Mucosa of descending colon (tissue), 3 donors: ENCODE measurements at regions of chr22 and their contacts with region 1.

Region 1: DNA sequence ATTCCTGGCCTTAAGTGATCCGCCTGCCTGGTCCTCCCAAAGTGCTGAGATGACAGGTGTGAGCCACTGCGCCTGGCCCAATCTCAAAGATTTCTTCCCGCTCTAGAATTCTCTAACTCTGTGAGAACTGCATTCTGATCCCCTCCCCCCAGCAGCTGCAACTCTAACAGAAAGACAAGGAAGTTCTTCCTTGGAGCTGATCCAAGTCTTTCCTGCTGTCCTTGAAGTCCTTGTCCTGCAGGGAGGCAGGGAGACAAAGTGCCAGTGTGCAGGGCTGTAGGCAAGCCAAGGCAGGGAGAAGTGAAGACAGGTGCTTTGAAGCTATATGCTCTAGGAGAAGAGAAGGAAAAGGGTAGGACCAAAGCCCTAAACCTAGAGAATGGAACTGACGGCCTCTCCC is 9.5 kb upstream of the GGA1 start:
- DNase-seq: peak in 2 of 3 donors; percentile 70 to 94
- ATAC-seq: peak; percentile 76
- H3K4me3 ChIP-seq: no peak overlapping the region
- H3K4me1 ChIP-seq: peaks cover 17% of the 10 kb centered on the region
- CTCF ChIP-seq: no peak

Region 2: DNA sequence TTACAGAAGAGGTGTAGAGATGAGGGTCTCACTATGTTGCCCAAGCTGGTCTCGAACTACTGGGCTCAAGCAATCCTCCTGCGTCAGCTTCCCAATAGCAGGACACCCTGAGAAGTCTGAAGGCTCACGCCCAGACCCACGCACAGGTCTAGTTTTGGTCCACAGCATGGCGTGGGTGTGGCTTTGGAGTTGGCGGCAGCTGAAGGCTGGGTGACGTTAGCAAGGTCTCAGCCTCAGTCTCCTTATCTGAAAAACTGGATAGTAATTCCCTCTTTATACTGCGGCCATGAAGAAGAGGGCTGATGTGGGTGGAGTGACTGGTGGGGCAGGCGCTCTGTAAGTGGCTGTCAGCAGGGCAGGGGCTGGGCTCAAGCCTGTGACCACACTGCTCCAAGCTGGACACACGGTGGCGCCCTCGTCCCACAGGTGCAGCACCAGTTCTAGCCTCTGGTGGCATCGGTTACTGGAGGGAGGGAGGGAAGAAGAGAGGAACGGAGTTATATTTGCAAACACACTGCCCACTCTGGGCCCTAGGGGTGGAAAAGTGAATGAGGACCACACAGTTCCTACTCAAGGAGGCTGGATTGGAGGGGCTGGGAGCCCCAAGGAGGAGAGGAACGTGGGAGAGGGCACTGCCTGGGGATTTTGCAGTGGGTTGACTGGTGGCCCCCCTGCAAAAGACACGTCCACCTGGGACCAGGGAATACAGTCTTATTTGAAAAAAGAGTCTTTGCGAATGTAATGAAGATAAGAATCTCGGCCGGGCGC is 60.4 kb before region 1 on chr22:
- intact Hi-C with region 1: loop called in 1 of 2 experiments (anchors 10 kb)
- DNase-seq: peak; percentile 91 to 97 (median 96)
- ATAC-seq: peak; percentile 97
- H3K4me3 ChIP-seq: no peak overlapping the region
- H3K4me1 ChIP-seq: peaks cover 14% of the 10 kb centered on the region
- CTCF ChIP-seq: peak; percentile 94

Region 3: DNA sequence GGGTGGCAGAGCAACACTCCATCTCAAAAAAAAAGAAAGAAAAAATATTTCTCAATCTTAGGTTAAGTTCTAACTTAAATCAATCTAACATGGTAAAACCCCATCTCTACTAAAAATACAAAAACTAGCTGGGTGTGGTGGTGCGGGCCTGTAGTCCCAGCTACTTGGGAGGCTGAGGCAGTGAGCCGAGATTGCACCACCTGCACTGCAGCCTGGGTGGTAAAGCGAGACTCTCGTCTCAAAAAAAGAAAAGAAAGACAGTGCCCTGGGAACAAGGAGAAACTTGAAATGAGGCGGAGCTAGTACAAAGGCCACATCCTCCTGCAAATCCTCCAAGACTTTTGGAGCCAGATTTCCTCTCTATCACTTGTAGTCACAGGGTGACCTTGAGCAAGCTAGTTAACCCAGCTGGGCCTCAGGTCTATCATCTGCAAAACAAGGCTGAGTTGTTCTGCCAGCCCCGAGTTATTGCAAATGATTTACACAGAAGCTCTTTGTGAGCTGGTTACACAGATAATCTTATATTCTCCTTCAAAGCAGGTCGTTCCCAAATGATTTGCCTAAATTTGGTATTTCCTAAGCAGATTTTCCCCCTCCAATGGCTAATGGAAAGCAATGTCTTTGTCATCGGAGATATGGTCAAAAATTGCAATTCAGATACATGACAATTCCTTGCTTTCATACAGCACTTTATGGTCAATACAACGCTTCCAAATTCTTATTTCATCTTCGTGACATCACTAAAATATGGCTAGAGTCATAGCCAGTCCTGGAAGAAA is 243.1 kb after region 1 on chr22:
- intact Hi-C with region 1: no loop called
- DNase-seq: peak in 1 of 3 donors; percentile 37
- ATAC-seq: no peak
- H3K4me3 ChIP-seq: no peak overlapping the region
- H3K4me1 ChIP-seq: peaks cover 12% of the 10 kb centered on the region
- CTCF ChIP-seq: no peak